ENCODE measurements at regions of chr9 and their contacts with region 1.

Region 1: DNA sequence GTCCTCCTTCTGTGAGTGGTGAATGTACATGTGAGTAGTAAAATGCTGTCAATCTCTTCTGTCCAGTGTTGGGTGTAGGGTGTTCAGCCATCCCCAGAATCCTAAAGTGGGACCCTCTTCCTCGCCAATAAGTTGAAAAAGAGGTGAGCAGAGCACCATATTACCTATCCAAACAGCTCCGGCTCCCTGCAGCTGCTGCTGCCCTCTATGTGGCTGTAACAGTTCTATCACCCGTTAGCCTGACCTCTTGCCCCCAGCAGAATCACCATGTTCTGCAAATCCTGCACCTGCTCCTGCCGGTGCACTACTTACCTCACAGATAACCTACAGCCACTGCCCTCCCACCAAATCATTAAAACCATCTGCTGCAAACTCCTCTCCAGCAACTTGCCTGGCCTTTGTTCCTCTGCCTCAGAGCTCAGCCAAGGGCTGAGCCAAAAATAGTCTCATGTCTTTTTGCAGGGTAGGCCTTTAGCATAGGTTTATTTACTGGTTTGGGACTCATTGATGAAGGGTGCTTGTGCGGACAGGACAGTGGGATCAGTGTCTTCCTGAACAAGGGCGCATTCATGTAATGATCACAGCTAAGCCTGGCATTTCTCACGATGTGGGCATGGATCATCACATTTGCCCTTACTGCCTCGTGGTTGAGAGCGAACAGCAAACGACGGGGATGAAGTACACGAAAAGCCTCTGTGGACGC is 49.6 kb upstream of the CCL21 start:
- DNase-seq: no peak
- H3K4me3 ChIP-seq: no peak overlapping the region
- H3K27ac ChIP-seq: no peak overlapping the region
- H3K4me1 ChIP-seq: no peaks in the 10 kb centered on the region
- H3K27me3 ChIP-seq: no peaks in the 10 kb centered on the region
- CTCF ChIP-seq: no peak
- EP300 ChIP-seq: no peak
- POLR2A ChIP-seq: no peak
- RAD21 ChIP-seq: no peak

Region 2: GRCh38 chr9:34651876-34652601 is 107.5 kb before region 1 on chr9 and contains the start of gene IL11RA:
- CTCF ChIA-PET with region 1: no interaction called
- POLR2A ChIA-PET with region 1: no interaction called
- DNase-seq: peak; percentile 81 to 94
- H3K4me3 ChIP-seq: peak within 1 kb of the TSS; percentile 48 to 65 (median 57)
- H3K27ac ChIP-seq: no peak within 1 kb of the TSS; the same call in 1 of the 2 replicates
- H3K4me1 ChIP-seq: peaks cover 6 to 30% (median 15%) of the 10 kb centered on the region in 4 experiments
- H3K27me3 ChIP-seq: no peaks in the 10 kb centered on the region; a peak in 1 of 7 replicates
- CTCF ChIP-seq: peak in 2 of 3 experiments; percentile 1 to 33; a peak in 2 of 4 replicates
- EP300 ChIP-seq: no peak
- POLR2A ChIP-seq: no peak
- RAD21 ChIP-seq: peak in 1 of 2 experiments; percentile 4; a peak in 1 of 4 replicates
- total RNA-seq, gene IL11RA: 5.1 and 5.5 TPM in 2 replicates

Region 3: DNA sequence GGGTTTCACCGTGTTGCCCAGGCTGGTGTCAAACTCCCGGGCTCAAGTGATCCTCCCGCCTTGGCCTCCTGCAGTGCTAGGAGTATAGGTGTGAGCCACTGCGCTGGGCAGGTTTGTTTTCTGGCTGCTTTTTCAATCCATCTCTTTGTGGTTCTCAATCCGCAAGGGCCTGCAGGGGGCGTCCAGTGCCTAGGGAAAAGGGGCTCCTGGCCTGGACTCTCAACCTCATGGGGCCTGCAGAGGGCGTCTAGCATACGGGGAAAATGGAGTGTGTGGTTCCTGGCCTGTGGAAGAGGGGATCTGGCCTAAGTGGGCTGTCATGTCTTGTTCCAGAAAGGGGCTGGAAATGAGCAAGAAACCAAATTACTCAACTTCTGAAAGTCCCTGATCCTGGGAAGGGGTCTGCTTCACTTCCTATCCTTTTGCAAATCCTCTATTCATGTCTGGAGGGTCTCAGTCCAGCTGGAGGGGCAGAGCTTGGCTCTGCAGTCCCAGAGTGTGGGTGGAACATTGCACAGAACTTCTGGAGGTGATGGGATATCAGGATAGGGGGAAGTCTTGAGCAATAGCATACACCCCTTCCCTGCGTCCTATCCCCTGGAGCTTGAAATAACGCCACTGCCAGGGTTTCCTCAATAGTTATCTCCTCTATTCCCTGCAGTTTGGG is 84.4 kb before region 1 on chr9:
- CTCF ChIA-PET with region 1: interaction called, 14 read pairs
- POLR2A ChIA-PET with region 1: no interaction called
- DNase-seq: peak in 1 of 2 experiments; percentile 92
- H3K4me3 ChIP-seq: no peak overlapping the region
- H3K27ac ChIP-seq: no peak overlapping the region
- H3K4me1 ChIP-seq: 0 out of 7 replicates have a peak, but pooled peaks cover 0 to 2% (median under 1%) of the 10 kb centered on the region in 4 experiments
- H3K27me3 ChIP-seq: no peaks in the 10 kb centered on the region
- CTCF ChIP-seq: peak; percentile 92 to 100 (median 99)
- EP300 ChIP-seq: peak in 1 of 2 experiments; percentile 48; a peak in 1 of 3 replicates
- POLR2A ChIP-seq: no peak
- RAD21 ChIP-seq: peak; percentile 92 to 93

Region 4: DNA sequence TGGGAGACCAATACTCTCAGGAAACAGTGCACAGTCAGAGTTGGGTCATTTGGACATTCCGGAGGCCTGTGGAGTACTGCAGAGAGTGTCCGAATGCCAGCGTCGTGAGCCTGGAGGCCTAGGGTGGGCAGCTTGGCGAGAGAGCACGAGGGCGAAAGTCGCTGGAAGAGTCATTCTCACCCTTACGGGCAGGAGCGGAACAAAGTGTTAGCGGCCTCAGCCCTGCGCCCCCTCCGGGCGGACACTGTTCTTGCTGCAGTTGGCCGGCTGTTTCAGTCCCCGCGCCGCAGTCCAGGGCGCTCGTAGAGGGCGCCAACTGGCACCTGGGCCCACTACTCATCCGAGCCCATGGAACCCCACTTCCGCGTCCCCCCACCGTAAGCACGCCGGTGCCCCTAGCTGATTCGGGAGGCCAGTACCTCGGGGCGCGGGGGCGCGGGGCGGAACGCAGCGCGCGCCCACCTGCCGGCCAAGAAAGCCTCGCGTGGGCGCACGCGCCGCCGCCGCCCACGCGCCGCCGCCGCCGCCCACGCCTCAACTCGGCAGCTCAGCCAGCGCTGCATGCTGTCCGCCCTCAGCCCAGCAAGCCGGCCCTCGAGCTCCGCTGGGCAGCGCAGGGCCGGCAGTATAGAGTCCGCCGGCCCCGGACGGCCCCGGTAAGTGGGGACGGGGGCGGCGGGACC is 50.1 kb after region 1 on chr9:
- CTCF ChIA-PET with region 1: interaction called, 14 read pairs
- POLR2A ChIA-PET with region 1: no interaction called
- DNase-seq: peak; percentile 49 to 83
- H3K4me3 ChIP-seq: peak overlapping the region; percentile 18 to 54 (median 28); a peak in 7 of 8 replicates
- H3K27ac ChIP-seq: no peak overlapping the region
- H3K4me1 ChIP-seq: peaks cover 0 to 3% (median 0%) of the 10 kb centered on the region in 4 experiments; a peak in 2 of 7 replicates
- H3K27me3 ChIP-seq: peaks cover 0 to 25% (median 12%) of the 10 kb centered on the region in 4 experiments; a peak in 5 of 7 replicates
- CTCF ChIP-seq: peak; percentile 77 to 86 (median 79)
- EP300 ChIP-seq: no peak
- POLR2A ChIP-seq: no peak
- RAD21 ChIP-seq: peak; percentile 43 to 62

Region 5: GRCh38 chr9:34884732-34885131 is 125.1 kb after region 1 on chr9:
- CTCF ChIA-PET with region 1: interaction called, 14 read pairs
- POLR2A ChIA-PET with region 1: no interaction called
- DNase-seq: no peak
- H3K4me3 ChIP-seq: no peak overlapping the region
- H3K27ac ChIP-seq: no peak overlapping the region
- H3K4me1 ChIP-seq: no peaks in the 10 kb centered on the region
- H3K27me3 ChIP-seq: no peaks in the 10 kb centered on the region
- CTCF ChIP-seq: no peak
- EP300 ChIP-seq: no peak
- POLR2A ChIP-seq: no peak
- RAD21 ChIP-seq: no peak

Region 6: DNA sequence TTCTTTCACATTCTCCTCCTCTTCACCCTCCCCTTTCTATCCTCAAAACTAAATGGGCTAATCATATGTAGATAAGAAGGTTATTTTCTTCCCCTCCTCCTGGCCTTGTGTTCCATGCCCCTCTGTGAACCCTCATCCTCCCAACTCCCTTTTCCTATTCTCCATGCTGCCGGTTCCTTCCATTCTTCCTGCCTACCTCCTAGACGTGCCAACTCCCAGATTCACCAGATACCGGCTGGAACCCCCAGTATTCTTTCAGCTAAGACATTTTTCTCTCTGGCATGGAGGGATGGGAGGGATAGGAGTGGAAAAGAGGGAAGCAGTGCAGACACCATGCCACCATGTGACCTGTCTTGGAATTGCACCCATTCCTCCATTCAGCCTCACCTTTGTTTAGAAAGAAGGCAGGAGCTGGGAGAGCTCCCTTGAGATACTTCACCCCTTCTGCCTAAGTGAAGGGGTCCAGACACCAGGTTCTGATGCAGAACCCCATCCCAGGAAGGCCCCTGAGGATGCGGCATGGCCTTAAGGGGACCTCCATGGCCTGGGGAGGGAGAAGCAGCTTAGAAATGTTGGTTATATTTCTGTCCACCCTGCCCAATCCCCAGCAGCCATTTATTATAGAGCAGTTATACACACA is 234.8 kb after region 1 on chr9:
- CTCF ChIA-PET with region 1: interaction called, 16 read pairs
- POLR2A ChIA-PET with region 1: no interaction called
- DNase-seq: peak in 1 of 2 experiments; percentile 71
- H3K4me3 ChIP-seq: no peak overlapping the region
- H3K27ac ChIP-seq: peak overlapping the region; percentile 35; the same call in 1 of the 2 replicates
- H3K4me1 ChIP-seq: peaks cover 18 to 36% (median 30%) of the 10 kb centered on the region in 4 experiments
- H3K27me3 ChIP-seq: no peaks in the 10 kb centered on the region
- CTCF ChIP-seq: peak; percentile 61 to 85 (median 73)
- EP300 ChIP-seq: no peak
- POLR2A ChIP-seq: no peak
- RAD21 ChIP-seq: peak; percentile 73 to 78